ENCODE measurements at regions of chr12 and their contacts with region 1.

Region 1: DNA sequence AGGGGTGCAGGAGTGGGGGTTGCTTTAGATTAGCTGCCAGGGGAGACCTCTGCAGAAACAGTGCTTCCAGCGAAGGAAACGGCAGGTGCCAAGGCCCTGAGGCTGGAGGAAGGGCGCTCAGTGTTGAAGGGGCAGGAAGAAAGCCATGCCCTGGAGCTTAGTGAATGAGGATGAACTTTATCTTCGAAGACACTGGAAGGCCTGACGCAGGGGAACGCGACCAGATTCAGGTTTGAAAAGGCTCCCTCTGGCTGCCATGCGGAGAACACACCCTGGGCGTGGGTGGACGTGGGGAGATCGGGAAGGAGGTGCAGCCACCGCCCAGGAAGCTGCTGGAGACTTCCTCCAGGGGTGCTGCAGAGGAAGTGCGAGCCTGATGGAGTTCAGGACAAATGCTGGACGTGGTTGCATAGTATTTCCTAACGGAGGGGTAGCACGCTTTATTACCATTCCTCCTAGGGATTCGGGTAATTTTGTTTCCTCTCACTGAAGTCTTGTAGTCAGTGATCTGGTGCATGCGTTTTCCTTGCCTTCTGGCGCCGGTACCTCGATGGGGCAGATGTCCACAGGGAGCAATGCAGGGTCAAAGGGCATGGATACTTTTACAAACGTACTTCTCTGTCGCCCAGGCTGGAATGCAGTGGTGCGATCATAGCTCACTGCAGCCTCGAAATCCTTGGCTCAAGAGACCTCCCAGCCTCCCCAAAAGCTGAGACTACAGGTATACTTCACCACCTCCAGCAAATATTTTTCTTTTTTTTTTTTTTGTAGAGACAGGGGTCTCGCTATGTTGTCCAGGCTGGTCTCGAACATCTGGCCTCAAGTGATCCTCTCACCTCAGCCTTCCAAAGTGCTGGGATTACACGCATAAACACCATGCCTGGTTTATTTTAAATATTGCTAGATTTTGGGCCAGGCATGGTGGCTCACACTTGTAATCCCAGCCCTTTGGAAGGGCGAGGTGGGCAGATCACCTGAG is 26.4 kb upstream of the UBC start:
- DNase-seq: peak; percentile 95
- H3K4me3 ChIP-seq: peak overlapping the region; percentile 31 to 73 (median 48)
- H3K27ac ChIP-seq: peak overlapping the region; percentile 88 to 94 (median 93)
- H3K4me1 ChIP-seq: peaks cover 23 to 56% (median 42%) of the 10 kb centered on the region in 6 donors
- H3K27me3 ChIP-seq: no peaks in the 10 kb centered on the region
- CTCF ChIP-seq: peak; percentile 95 to 99 (median 97)
- POLR2A ChIP-seq: no peak

Region 2: GRCh38 chr12:124906606-124907261 is 34.1 kb before region 1 on chr12:
- intact Hi-C with region 1: loop called (anchors 5 kb)
- DNase-seq: peak; percentile 85
- H3K4me3 ChIP-seq: no peak overlapping the region
- H3K27ac ChIP-seq: peak overlapping the region in 5 of 8 donors; percentile 20 to 64 (median 35)
- H3K4me1 ChIP-seq: peaks cover 26 to 77% (median 49%) of the 10 kb centered on the region in 6 donors
- H3K27me3 ChIP-seq: no peaks in the 10 kb centered on the region
- CTCF ChIP-seq: peak; percentile 86 to 99 (median 95)
- POLR2A ChIP-seq: no peak